A549 (cell line): ENCODE measurements at regions of chr1 and their contacts with region 1.

Region 1: DNA sequence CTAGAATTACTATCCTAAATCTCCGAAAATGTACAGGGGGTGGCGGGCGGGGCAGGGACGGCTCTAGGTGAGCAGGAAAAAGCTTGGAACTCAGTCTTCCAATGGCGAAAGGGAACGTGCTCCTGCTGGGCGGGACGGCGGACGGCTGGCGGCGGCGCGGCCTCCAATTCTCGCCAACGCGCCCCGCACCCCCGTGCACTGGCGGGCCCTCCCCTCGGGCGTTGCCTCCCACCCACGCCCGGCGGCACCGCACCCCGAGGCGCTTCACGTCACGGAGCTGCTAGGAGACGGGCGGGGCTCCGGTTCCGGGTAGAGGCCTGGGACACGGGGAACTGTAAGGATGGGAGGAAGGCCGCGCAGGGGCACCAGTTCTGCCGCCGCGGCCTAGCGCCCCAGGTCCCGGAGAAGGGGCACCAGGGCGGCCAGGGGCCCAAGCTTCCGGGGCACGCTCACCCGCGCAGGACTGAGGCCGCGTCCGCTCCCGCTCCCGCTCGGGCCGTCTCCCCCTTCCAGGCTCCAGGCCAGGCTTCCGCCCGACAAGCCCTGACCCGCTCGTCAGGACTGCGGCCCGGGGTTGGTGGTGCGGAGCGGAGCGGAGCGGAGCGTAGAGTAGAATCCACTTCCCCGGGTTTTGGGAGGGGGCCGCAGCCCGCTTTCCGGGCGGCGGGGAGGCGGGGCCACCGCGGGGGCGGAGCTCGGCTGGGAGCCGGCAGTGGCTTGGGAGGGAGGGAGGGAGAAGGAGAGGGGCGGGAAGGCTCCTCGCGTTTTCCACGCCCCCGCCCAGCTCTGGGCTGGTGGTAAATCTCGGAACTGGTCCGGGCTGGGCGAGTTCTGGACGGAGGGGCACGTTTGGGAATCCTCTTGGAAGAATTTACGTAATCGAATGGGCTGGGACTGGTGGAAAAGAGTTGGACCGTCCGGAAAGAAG is at the start of gene DDX59:
- DNase-seq: peak; percentile 95 to 98
- ATAC-seq: peak; percentile 89 to 90
- H3K4me3 ChIP-seq: peak within 1 kb of the TSS; percentile 60
- H3K27ac ChIP-seq: peak within 1 kb of the TSS; percentile 98 to 99
- H3K4me1 ChIP-seq: peaks cover 14% of the 10 kb centered on the region
- CTCF ChIP-seq: no peak
- EP300 ChIP-seq: peak in 1 of 2 experiments; percentile 43; a peak in 1 of 5 replicates
- POLR2A ChIP-seq: peak; percentile 46; the same call in 1 of the 2 replicates
- RAD21 ChIP-seq: peak in 1 of 2 experiments; percentile 11; a peak in 1 of 5 replicates
- polyA plus RNA-seq, gene DDX59: 28.7 and 42.9 TPM in 2 replicates

Region 2: GRCh38 chr1:200634261-200635122 is 35.1 kb before region 1 on chr1:
- CTCF ChIA-PET with region 1: interaction called, 4 read pairs
- POLR2A ChIA-PET with region 1: interaction called, 11 read pairs
- DNase-seq: peak in 1 of 2 experiments; percentile 21
- ATAC-seq: peak; percentile 19 to 36; a peak in 1 of 6 replicates
- H3K4me3 ChIP-seq: no peak overlapping the region
- H3K27ac ChIP-seq: no peak overlapping the region
- H3K4me1 ChIP-seq: peaks cover 1% of the 10 kb centered on the region; the same call in 2 of the 3 replicates
- CTCF ChIP-seq: peak; percentile 38
- EP300 ChIP-seq: no peak
- POLR2A ChIP-seq: no peak
- RAD21 ChIP-seq: peak in 1 of 2 experiments; percentile 42; a peak in 1 of 5 replicates

Region 3: DNA sequence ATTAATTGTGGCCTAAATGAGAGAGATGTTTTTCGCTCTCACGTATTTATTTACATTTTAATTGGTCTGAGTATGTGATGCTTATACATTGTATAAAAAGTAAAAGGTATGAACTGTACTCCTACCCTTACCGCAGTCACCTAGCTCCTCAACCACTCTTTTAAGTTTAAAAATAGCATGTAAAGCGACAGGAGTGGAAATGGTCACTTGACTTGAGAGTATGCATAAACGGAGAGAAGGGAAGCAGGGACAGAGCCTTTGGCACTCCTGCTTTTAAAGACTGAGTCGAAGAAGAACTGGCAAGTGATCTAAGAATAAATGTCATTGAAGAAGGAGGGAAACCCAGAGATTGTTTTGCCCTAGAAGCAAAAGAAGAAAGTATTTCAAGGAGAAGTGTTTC is 11.7 kb after region 1 on chr1:
- CTCF ChIA-PET with region 1: interaction called, 3 read pairs
- POLR2A ChIA-PET with region 1: interaction called, 15 read pairs
- DNase-seq: no peak
- ATAC-seq: no peak
- H3K4me3 ChIP-seq: no peak overlapping the region
- H3K27ac ChIP-seq: no peak overlapping the region
- H3K4me1 ChIP-seq: 0 out of 3 replicates have a peak, but pooled peaks cover 2% of the 10 kb centered on the region
- CTCF ChIP-seq: no peak
- EP300 ChIP-seq: no peak
- POLR2A ChIP-seq: no peak
- RAD21 ChIP-seq: no peak

Region 4: DNA sequence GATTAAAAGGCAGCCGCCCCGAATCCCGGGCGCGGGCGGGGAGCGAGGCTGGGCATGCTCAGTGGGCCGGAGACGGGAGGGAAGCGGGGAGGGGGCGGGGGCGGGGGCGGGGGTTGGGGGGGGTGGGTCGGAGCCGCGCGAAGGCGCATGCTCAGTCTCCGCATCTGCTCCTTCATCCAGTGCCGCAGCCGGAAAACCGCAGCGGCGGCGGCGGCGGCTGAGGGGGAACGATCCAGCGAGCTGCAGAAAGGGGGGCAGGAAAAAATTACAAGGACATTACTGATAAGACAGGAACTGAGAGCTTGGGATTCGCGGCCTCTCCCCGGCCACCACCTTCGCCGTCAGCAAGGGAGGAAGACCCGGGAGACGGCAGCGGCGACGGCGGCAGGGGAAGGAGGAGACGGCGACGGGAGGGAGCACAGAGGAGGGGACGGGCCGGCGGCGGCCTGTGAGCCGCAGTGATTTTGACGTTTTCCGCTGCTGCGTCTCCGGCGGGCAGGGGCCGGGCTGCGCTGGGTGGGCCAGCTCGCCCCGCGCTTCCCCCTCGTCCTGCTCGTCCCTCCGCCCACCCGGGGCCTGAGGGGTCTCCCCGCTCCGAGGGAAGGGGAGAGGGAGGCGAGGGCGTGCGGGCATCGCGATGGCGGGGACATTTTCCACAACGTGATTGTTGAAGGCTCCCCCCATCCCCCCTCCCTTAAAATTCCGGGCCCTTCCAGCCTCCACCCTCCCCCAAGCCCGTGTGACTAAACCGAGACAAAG is 69.3 kb after region 1 on chr1 and contains the start of gene CAMSAP2:
- CTCF ChIA-PET with region 1: interaction called, 4 read pairs
- POLR2A ChIA-PET with region 1: interaction called, 71 read pairs
- DNase-seq: peak; percentile 84 to 87
- ATAC-seq: peak; percentile 87 to 88
- H3K4me3 ChIP-seq: peak within 1 kb of the TSS; percentile 91
- H3K27ac ChIP-seq: peak within 1 kb of the TSS; percentile 85 to 98
- H3K4me1 ChIP-seq: peaks cover 33% of the 10 kb centered on the region
- CTCF ChIP-seq: no peak
- EP300 ChIP-seq: no peak
- POLR2A ChIP-seq: peak; percentile 31
- RAD21 ChIP-seq: no peak; a peak in 2 of 5 replicates
- polyA plus RNA-seq, gene CAMSAP2: 28.4 and 28.5 TPM in 2 replicates

Region 5: GRCh38 chr1:200896531-200897196 is 227.1 kb after region 1 on chr1:
- CTCF ChIA-PET with region 1: no interaction called
- POLR2A ChIA-PET with region 1: interaction called, 15 read pairs
- DNase-seq: peak; percentile 93 to 98
- ATAC-seq: peak; percentile 73 to 78
- H3K4me3 ChIP-seq: peak overlapping the region; percentile 68
- H3K27ac ChIP-seq: peak overlapping the region; percentile 100
- H3K4me1 ChIP-seq: peaks cover 77% of the 10 kb centered on the region
- CTCF ChIP-seq: no peak
- EP300 ChIP-seq: peak; percentile 86 to 91; a peak in 3 of 5 replicates
- POLR2A ChIP-seq: peak; percentile 41; the same call in 1 of the 2 replicates
- RAD21 ChIP-seq: peak in 1 of 2 experiments; percentile 41; a peak in 1 of 5 replicates